B cell (primary cell): ENCODE measurements at regions of chr2 and their contacts with region 1.

Region 1: DNA sequence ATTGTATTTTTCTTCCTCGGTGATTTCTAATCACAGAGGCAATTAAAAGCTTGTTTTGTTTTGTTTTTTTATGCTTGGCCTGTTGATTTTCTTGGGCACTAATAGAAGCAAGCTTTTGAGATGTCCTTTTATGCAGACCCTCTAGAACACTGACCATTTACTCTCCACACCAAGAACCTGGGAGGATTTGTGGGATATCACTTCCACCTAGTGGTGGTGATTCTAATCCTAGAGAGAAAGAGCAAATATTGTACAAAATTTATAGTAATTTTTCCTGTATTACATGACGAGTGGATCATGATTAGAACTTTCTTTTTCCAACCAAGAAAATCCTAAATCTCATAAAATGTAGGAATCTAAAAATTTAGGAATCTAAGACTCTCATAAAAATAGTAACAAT is 23.4 kb downstream of the NEMP2 start:
- DNase-seq: no peak
- ATAC-seq: no peak
- H3K4me3 ChIP-seq: no peak overlapping the region
- H3K4me3 Mint-ChIP-seq: no peak overlapping the region
- H3K27ac ChIP-seq: no peak overlapping the region
- H3K27ac Mint-ChIP-seq: no peak overlapping the region
- H3K4me1 ChIP-seq: peaks cover 12 to 21% of the 10 kb centered on the region in 2 donors
- H3K4me1 Mint-ChIP-seq: peaks cover 20% of the 10 kb centered on the region
- H3K27me3 ChIP-seq: no peaks in the 10 kb centered on the region
- H3K27me3 Mint-ChIP-seq: no peaks in the 10 kb centered on the region
- CTCF ChIP-seq: peak; percentile 13

Region 2: DNA sequence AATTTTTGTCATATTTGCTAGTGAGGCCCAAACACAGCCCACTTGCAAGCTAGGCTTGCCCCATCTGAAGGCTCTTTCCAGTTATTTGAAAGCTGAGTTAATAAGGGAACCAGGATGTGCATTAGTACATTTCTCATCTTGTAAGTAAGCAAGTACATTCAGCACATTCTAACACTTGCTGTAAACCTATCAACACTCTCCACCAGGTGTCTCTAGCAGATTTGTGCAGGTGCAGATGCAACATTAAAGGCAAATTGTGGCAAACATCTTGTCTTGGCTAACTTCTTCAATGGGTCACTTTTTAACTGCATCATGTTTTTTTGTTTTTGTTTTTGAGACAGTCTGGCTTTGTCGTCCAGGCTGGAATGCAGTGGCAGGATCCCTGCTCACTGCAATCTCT is 128.3 kb before region 1 on chr2:
- CTCF ChIA-PET with region 1: no interaction called
- POLR2A ChIA-PET with region 1: no interaction called
- intact Hi-C with region 1: loop called (anchors 2 kb)
- DNase-seq: peak; percentile 66
- ATAC-seq: peak; percentile 66
- H3K4me3 ChIP-seq: no peak overlapping the region
- H3K4me3 Mint-ChIP-seq: no peak overlapping the region
- H3K27ac ChIP-seq: no peak overlapping the region
- H3K27ac Mint-ChIP-seq: no peak overlapping the region
- H3K4me1 ChIP-seq: no peaks in the 10 kb centered on the region
- H3K4me1 Mint-ChIP-seq: peaks cover 2% of the 10 kb centered on the region
- H3K27me3 ChIP-seq: no peaks in the 10 kb centered on the region
- H3K27me3 Mint-ChIP-seq: no peaks in the 10 kb centered on the region
- CTCF ChIP-seq: peak; percentile 66

Region 3: DNA sequence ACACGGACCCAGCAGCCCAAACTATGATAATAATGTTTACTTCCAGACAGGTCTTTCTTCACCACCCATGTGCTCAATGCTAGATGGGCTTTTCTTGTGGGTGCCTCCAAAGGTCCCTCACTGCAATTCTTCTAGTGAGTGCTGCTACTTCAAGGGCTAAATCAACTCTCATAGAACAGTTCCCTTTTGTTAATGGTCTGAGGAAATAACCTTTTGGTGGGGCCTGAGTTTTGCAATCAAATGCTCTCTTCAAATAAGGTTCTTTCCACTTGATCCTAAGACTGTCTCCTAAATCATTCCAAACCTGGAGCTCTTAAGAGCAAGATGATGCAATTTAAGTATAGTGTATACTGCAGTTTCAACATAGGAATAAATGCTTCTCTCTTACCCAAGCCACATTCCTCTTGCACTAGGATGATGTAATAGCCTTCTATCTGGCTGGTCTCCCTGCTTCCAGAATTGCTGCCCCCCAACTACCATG is 17.5 kb after region 1 on chr2:
- CTCF ChIA-PET with region 1: interaction called, 3 read pairs
- POLR2A ChIA-PET with region 1: no interaction called
- intact Hi-C with region 1: loop called (anchors 2 kb)
- DNase-seq: no peak
- ATAC-seq: no peak
- H3K4me3 ChIP-seq: no peak overlapping the region
- H3K4me3 Mint-ChIP-seq: no peak overlapping the region
- H3K27ac ChIP-seq: no peak overlapping the region
- H3K27ac Mint-ChIP-seq: peak overlapping the region; percentile 10
- H3K4me1 ChIP-seq: peaks cover 44 to 48% of the 10 kb centered on the region in 2 donors
- H3K4me1 Mint-ChIP-seq: peaks cover 70% of the 10 kb centered on the region
- H3K27me3 ChIP-seq: no peaks in the 10 kb centered on the region
- H3K27me3 Mint-ChIP-seq: no peaks in the 10 kb centered on the region
- CTCF ChIP-seq: no peak